Activated T-helper 2 cell treated with anti-CD3 and anti-CD28 coated beads, Interferon-gamma antibody, Interleukin-2, Interleukin-4, amounts not matched to agents 10 μg/mL and 5 μg/mL and 100 μg/mL, durations not matched to agents 14 hours and 24 hours and 36 hours (primary cell): ENCODE measurements at regions of chr1 and their contacts with region 1.

Region 1: GRCh38 chr1:89274411-89274857 is 1.8 kb upstream of the GBP5 start:
- DNase-seq: no peak
- H3K4me3 Mint-ChIP-seq: peak overlapping the region; percentile 71
- H3K27ac Mint-ChIP-seq: peak overlapping the region; percentile 93
- H3K4me1 Mint-ChIP-seq: peaks cover 71% of the 10 kb centered on the region
- H3K27me3 Mint-ChIP-seq: no peaks in the 10 kb centered on the region

Region 2: GRCh38 chr1:89125913-89126580 is 148.4 kb before region 1 on chr1 and contains the start of gene GBP2:
- intact Hi-C with region 1: loop called (anchors 2 kb)
- DNase-seq: no peak
- H3K4me3 Mint-ChIP-seq: peak within 1 kb of the TSS; percentile 97
- H3K27ac Mint-ChIP-seq: peak within 1 kb of the TSS; percentile 99
- H3K4me1 Mint-ChIP-seq: peaks cover 61% of the 10 kb centered on the region
- H3K27me3 Mint-ChIP-seq: no peaks in the 10 kb centered on the region
- total RNA-seq, gene GBP2: 71.9 and 74.1 TPM in 2 replicates

Region 3: GRCh38 chr1:89259283-89259971 is 15.0 kb before region 1 on chr1:
- intact Hi-C with region 1: loop called (anchors 1 kb)
- DNase-seq: peak; percentile 35
- H3K4me3 Mint-ChIP-seq: peak overlapping the region; percentile 27
- H3K27ac Mint-ChIP-seq: peak overlapping the region; percentile 56
- H3K4me1 Mint-ChIP-seq: peaks cover 48% of the 10 kb centered on the region
- H3K27me3 Mint-ChIP-seq: no peaks in the 10 kb centered on the region

Region 4: DNA sequence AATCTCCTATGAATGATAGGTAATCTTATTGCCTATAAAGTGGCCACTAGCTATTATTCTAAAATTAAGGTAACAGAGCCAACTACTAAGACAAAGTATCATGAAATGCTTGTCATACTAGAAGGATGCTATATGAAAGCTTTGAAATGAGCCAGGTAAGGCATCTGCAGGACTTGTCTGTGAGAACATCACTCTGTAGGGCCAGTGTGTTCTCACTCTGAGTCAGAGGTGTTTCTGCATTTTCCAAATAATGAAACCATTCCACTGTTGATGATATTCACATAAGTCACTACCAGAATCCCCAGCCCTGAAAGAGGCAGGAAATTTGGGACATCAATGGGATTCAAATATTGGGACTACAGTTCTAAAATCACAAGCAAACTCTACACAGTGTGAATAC is 24.0 kb after region 1 on chr1:
- intact Hi-C with region 1: loop called (anchors 1 kb)
- DNase-seq: no peak
- H3K4me3 Mint-ChIP-seq: no peak overlapping the region
- H3K27ac Mint-ChIP-seq: no peak overlapping the region
- H3K4me1 Mint-ChIP-seq: peaks cover 59% of the 10 kb centered on the region
- H3K27me3 Mint-ChIP-seq: peaks cover 1% of the 10 kb centered on the region

Region 5: GRCh38 chr1:89358287-89358893 is 84.0 kb after region 1 on chr1:
- intact Hi-C with region 1: loop called (anchors 1 kb)
- DNase-seq: peak; percentile 73
- H3K4me3 Mint-ChIP-seq: no peak overlapping the region
- H3K27ac Mint-ChIP-seq: peak overlapping the region; percentile 7
- H3K4me1 Mint-ChIP-seq: peaks cover 45% of the 10 kb centered on the region
- H3K27me3 Mint-ChIP-seq: peaks cover 12% of the 10 kb centered on the region